Transverse colon (tissue), 4 donors: ENCODE measurements at regions of chr7 and their contacts with region 1.

Region 1: DNA sequence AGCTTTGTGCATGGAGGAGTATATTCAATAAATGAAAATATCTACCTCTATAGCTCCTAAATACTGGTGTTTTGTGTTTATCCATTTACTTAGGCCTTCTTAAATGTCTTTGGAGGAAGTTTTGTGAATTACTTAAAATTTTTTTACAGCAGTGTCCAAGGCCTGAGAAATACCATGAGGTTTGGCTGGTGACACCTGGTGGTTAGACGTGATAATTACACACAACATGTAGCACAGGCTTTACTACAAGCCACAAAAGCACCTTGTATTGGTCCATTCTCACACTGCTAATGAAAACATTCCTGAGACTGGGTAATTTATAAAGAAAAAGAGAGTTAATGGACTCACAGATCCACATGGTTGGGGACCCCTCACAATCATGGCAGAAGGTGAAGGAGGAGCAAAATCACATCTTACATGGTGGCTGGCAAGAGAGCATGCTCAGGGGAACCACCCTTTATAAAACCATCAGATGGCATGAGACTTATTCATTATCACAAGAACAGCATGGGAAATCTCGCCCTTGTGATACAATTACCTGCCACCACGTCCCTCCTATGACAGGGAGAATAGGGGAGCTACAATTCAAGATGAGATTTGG is 20.6 kb downstream of the HYAL4 start:
- DNase-seq: peak; percentile 53
- H3K4me3 ChIP-seq: no peak overlapping the region
- H3K27ac ChIP-seq: peak overlapping the region; percentile 64 to 82 (median 74)
- H3K4me1 ChIP-seq: peaks cover 4 to 21% (median 11%) of the 10 kb centered on the region in 4 donors
- H3K27me3 ChIP-seq: no peaks in the 10 kb centered on the region
- CTCF ChIP-seq: peak; percentile 69 to 86 (median 76)
- EP300 ChIP-seq: no peak
- POLR2A ChIP-seq: no peak

Region 2: GRCh38 chr7:123494193-123494796 is 371.3 kb before region 1 on chr7:
- in situ Hi-C with region 1: loop called in 1 of 4 experiments (anchors 10 kb)
- intact Hi-C with region 1: no loop called
- DNase-seq: peak; percentile 13
- H3K4me3 ChIP-seq: no peak overlapping the region
- H3K27ac ChIP-seq: no peak overlapping the region
- H3K4me1 ChIP-seq: peaks cover 0 to 6% (median 2%) of the 10 kb centered on the region in 4 donors
- H3K27me3 ChIP-seq: no peaks in the 10 kb centered on the region
- CTCF ChIP-seq: peak; percentile 54 to 73 (median 71)
- EP300 ChIP-seq: no peak
- POLR2A ChIP-seq: no peak

Region 3: GRCh38 chr7:123580406-123581161 is 285.0 kb before region 1 on chr7:
- in situ Hi-C with region 1: loop called in 1 of 4 experiments (anchors 25 kb)
- intact Hi-C with region 1: no loop called
- DNase-seq: no peak
- H3K4me3 ChIP-seq: no peak overlapping the region
- H3K27ac ChIP-seq: no peak overlapping the region
- H3K4me1 ChIP-seq: no peaks in the 10 kb centered on the region
- H3K27me3 ChIP-seq: peaks cover 7% of the 10 kb centered on the region
- CTCF ChIP-seq: peak; percentile 21 to 55 (median 40)
- EP300 ChIP-seq: no peak
- POLR2A ChIP-seq: no peak

Region 4: DNA sequence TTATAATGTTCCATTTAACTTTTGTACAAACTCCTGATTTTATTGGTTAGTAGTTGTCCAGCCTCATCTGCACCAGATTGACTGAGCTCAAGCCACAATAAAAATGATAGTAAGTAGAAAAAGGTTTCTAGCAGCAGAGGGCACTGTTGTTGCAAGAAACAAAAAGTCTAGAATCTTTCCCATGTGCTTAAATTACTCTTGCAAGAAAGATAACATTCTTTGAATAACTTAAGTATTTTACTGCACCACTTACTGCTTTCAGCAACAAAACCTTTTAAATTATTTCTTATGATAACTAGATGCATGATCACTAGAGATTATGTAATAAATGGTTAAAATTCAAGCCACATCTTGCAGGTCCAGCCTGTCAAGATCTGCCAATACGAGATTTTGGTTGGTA is 182.9 kb before region 1 on chr7:
- in situ Hi-C with region 1: loop called (anchors 5 to 25 kb)
- intact Hi-C with region 1: loop called (anchors 10 kb)
- DNase-seq: no peak
- H3K4me3 ChIP-seq: no peak overlapping the region
- H3K27ac ChIP-seq: no peak overlapping the region
- H3K4me1 ChIP-seq: no peaks in the 10 kb centered on the region
- H3K27me3 ChIP-seq: no peaks in the 10 kb centered on the region
- CTCF ChIP-seq: peak; percentile 41 to 52 (median 46)
- EP300 ChIP-seq: no peak
- POLR2A ChIP-seq: no peak

Region 5: GRCh38 chr7:123689250-123689649 is 176.4 kb before region 1 on chr7:
- in situ Hi-C with region 1: loop called (anchors 5 to 25 kb)
- intact Hi-C with region 1: loop called (anchors 10 kb)
- DNase-seq: no peak
- H3K4me3 ChIP-seq: no peak overlapping the region
- H3K27ac ChIP-seq: no peak overlapping the region
- H3K4me1 ChIP-seq: peaks cover 0 to 3% (median 0%) of the 10 kb centered on the region in 4 donors
- H3K27me3 ChIP-seq: no peaks in the 10 kb centered on the region
- CTCF ChIP-seq: no peak
- EP300 ChIP-seq: no peak
- POLR2A ChIP-seq: no peak

Region 6: DNA sequence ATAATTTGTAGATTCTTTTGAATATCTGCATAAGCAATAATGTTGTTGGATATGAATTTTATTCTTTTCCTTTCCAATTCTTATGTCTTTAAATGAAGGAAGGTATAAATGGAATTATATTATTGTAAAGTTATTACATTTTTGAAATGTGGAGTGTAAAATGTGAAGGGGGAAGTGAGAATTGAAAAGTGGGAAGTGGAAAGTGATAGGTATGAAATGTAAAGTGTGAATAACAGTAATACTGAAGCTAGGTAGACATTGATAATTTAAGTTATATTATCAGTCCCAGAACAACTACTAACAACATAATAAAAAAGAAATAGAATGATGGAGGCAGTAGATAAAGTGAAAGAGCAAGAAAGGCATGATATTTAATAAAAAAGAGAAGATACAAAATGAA is 60.3 kb before region 1 on chr7:
- in situ Hi-C with region 1: loop called in 1 of 4 experiments (anchors 10 kb)
- intact Hi-C with region 1: loop called (anchors 10 kb)
- DNase-seq: no peak
- H3K4me3 ChIP-seq: no peak overlapping the region
- H3K27ac ChIP-seq: no peak overlapping the region
- H3K4me1 ChIP-seq: no peaks in the 10 kb centered on the region
- H3K27me3 ChIP-seq: no peaks in the 10 kb centered on the region
- CTCF ChIP-seq: no peak
- EP300 ChIP-seq: no peak
- POLR2A ChIP-seq: no peak

Region 7: DNA sequence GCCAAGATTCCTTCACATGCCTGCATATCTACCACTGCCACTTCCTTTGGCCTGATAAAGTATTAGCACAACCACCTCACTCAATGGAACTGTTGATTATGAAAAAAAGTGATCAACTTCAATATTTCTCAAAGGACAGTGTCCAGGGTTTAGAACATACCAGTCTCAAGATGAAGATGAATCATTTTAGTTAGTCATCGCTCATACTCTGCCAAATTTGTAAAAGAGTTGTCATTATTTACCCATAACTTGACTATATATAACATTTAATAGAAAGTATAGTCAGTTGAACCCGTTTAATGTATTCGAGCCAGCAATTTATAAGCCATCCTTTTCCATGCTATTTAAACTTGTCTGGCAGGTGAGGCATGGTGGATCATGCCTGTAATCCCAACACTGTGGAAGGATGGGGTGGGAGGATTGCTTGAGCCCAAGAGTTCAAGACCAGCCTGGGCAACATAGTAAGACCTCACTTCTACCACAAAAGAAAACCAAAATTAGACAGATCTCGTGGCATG is 92.6 kb after region 1 on chr7:
- in situ Hi-C with region 1: no loop called
- intact Hi-C with region 1: no loop called
- DNase-seq: no peak
- H3K4me3 ChIP-seq: no peak overlapping the region
- H3K27ac ChIP-seq: no peak overlapping the region
- H3K4me1 ChIP-seq: no peaks in the 10 kb centered on the region
- H3K27me3 ChIP-seq: no peaks in the 10 kb centered on the region
- CTCF ChIP-seq: no peak
- EP300 ChIP-seq: no peak
- POLR2A ChIP-seq: no peak